Mammary epithelial cell (primary cell): ENCODE measurements at regions of chr17 and their contacts with region 1.

Region 1: GRCh38 chr17:28335201-28335955 is at the starts of genes IFT20 and TNFAIP1:
- DNase-seq: peak; percentile 100
- H3K4me3 ChIP-seq: peak within 1 kb of the TSS; percentile 77 to 91 (median 89)
- H3K27ac ChIP-seq: peak within 1 kb of the TSS; percentile 98
- H3K4me1 ChIP-seq: peaks cover 42% of the 10 kb centered on the region
- H3K27me3 ChIP-seq: no peaks in the 10 kb centered on the region
- CTCF ChIP-seq: no peak
- total RNA-seq, gene IFT20: 22.0 to 26.1 TPM
- total RNA-seq, gene TNFAIP1: 103 to 108 TPM

Region 2: DNA sequence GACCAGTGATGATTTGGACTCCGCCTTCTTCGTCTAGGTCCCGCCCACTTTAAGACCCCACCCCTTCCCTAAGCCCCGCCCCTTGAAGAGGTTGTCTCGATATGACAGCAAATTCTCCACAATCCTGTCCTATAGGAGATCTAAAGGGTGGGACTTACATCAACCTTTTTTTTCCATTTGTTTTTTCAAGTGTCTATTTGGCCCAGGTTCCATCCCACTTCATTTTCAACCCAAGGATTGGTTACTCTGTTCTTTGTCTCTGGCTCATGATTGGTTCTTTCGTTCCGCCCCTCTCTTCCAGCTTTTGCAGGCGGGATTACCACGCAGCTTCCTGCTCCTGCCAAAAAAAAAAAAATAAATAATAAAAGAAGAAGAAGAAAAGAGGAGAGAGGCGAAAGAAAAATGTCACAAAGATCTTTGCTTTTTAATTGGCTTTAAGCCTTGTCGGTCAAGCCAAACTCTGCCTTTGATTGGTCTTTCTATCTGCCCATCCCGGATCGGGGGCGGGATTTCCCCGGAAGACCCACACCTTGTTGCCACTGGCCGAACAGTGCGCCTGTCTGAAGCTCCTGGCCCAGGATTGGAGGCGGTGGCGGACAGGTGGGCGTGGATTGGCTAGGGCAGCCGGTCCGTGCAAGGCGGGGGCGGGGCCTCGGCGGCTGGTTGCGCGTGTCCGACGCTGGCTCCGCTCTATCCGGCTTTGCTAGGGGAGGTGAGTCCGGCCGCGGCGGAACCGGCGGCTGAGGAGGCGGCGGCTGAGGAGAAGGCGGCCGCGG is 294.1 kb before region 1 on chr17:
- CTCF ChIA-PET with region 1: no interaction called
- dilution Hi-C with region 1: no loop called
- in situ Hi-C with region 1: no loop called
- intact Hi-C with region 1: loop called (anchors 5 kb)
- DNase-seq: peak; percentile 100
- H3K4me3 ChIP-seq: peak overlapping the region; percentile 79 to 87 (median 86)
- H3K27ac ChIP-seq: peak overlapping the region; percentile 21
- H3K4me1 ChIP-seq: peaks cover 13% of the 10 kb centered on the region
- H3K27me3 ChIP-seq: no peaks in the 10 kb centered on the region
- CTCF ChIP-seq: no peak

Region 3: DNA sequence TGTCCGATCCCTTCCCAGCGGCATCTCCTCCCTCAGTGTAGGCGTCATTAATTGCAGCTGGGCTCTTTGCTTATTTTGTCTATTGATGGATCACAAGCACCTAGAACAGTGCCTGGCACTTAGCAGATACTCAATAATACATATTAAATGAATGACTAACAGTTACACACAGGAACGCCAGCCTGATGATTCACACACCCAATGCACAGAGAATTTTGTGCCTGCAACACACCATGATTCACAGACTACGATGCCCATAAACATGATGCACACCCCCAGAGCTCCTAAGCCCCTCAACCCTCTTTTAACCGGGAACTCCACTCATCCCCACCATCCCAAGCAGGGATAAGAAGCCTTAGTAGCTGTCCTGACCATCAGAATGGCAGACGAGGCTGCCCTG is 82.9 kb before region 1 on chr17:
- CTCF ChIA-PET with region 1: no interaction called
- dilution Hi-C with region 1: no loop called
- in situ Hi-C with region 1: no loop called
- intact Hi-C with region 1: loop called (anchors 5 kb)
- DNase-seq: peak; percentile 83
- H3K4me3 ChIP-seq: no peak overlapping the region
- H3K27ac ChIP-seq: no peak overlapping the region
- H3K4me1 ChIP-seq: peaks cover 15% of the 10 kb centered on the region
- H3K27me3 ChIP-seq: no peaks in the 10 kb centered on the region
- CTCF ChIP-seq: no peak

Region 4: GRCh38 chr17:28357061-28357900 is 21.9 kb after region 1 on chr17 and contains the start of gene POLDIP2:
- CTCF ChIA-PET with region 1: no interaction called
- dilution Hi-C with region 1: no loop called
- in situ Hi-C with region 1: no loop called
- intact Hi-C with region 1: loop called (anchors 1 kb)
- DNase-seq: peak; percentile 94
- H3K4me3 ChIP-seq: peak within 1 kb of the TSS; percentile 88 to 99 (median 99)
- H3K27ac ChIP-seq: peak within 1 kb of the TSS; percentile 85
- H3K4me1 ChIP-seq: peaks cover 16% of the 10 kb centered on the region
- H3K27me3 ChIP-seq: no peaks in the 10 kb centered on the region
- CTCF ChIP-seq: no peak
- total RNA-seq, gene POLDIP2: 76.3 to 80.5 TPM

Region 5: DNA sequence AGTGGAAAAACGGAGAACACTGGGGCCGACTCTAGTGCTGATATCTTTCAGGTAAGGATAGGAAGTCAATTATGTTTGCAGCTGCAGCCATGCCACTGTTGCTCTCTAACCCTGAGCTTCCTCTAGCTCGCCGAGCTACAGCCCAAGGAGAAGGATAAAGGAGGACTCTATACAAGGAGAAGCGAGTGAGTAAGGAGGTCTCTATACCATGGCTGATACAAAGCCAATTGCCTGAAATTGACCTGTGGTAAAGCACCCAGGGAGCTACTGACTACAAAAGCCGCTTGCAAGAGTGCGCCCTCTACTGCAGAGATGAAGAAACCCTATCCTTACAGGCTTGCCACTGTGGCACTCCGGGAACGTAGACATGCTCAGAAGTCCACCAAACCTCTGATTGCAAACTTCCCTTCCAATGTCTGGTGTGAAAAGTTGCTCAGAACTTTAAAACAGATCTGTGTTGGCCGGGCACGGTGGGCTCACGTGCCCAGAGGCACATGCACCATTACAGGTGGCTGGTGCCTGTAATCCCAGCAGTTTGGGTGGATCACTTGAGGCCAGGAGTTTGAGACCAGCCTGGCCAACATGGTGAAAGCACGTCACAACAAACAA is 81.4 kb after region 1 on chr17:
- CTCF ChIA-PET with region 1: interaction called, 4 read pairs
- dilution Hi-C with region 1: no loop called
- in situ Hi-C with region 1: no loop called
- intact Hi-C with region 1: loop called (anchors 1 kb)
- DNase-seq: peak; percentile 56
- H3K4me3 ChIP-seq: no peak overlapping the region
- H3K27ac ChIP-seq: no peak overlapping the region
- H3K4me1 ChIP-seq: peaks cover 4% of the 10 kb centered on the region
- H3K27me3 ChIP-seq: no peaks in the 10 kb centered on the region
- CTCF ChIP-seq: peak; percentile 86 to 91